Activated B cell treated with CpG ODN at 0.5 μM for 24 hours (primary cell): ENCODE measurements at regions of chr16 and their contacts with region 1.

Region 1: GRCh38 chr16:23803591-23804123 is 32.1 kb upstream of the PRKCB start:
- DNase-seq: peak; percentile 48
- ATAC-seq: peak; percentile 82
- H3K4me3 Mint-ChIP-seq: peak overlapping the region; percentile 51
- H3K27ac Mint-ChIP-seq: peak overlapping the region; percentile 26
- H3K4me1 Mint-ChIP-seq: peaks cover 47% of the 10 kb centered on the region
- H3K27me3 Mint-ChIP-seq: no peaks in the 10 kb centered on the region
- CTCF ChIP-seq: no peak

Region 2: DNA sequence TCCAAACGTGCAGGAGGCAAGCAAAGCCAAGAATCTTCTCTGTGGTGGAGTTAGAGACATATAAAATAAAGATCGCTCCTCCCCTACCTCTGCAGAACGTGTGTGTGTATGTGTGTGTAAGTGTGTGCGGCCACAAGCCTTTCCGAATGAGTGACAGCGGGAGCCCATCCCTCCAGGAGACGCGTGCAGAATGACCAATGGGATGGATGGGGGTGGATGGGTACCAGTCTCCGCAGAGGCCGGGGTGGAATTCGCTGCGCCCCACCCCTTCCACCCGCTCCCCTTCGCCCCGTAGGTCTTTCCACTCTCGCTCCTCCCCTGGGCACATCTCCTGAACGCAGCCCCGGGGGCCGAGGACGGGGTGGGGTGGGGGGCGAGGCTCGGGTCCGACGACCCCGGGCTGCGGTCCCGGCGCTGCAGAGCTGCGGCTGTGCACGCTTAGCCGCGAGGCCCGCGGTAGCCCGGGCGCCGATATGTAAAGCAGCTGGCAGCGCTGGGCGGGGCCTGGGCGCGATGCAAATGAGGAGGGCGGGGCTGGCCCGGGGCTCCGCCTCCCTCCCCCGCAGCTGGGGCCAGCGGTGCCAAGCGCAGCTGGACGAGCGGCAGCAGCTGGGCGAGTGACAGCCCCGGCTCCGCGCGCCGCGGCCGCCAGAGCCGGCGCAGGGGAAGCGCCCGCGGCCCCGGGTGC is 31.9 kb after region 1 on chr16 and contains the start of gene PRKCB:
- CTCF ChIA-PET with region 1: interaction called, 11 read pairs
- POLR2A ChIA-PET with region 1: interaction called, 7 read pairs
- intact Hi-C with region 1: loop called (anchors 1 kb)
- DNase-seq: peak; percentile 98
- ATAC-seq: peak; percentile 80
- H3K4me3 Mint-ChIP-seq: peak within 1 kb of the TSS; percentile 98
- H3K27ac Mint-ChIP-seq: peak within 1 kb of the TSS; percentile 91
- H3K4me1 Mint-ChIP-seq: peaks cover 43% of the 10 kb centered on the region
- H3K27me3 Mint-ChIP-seq: no peaks in the 10 kb centered on the region
- CTCF ChIP-seq: no peak
- total RNA-seq, gene PRKCB: 122 and 146 TPM in 2 replicates

Region 3: DNA sequence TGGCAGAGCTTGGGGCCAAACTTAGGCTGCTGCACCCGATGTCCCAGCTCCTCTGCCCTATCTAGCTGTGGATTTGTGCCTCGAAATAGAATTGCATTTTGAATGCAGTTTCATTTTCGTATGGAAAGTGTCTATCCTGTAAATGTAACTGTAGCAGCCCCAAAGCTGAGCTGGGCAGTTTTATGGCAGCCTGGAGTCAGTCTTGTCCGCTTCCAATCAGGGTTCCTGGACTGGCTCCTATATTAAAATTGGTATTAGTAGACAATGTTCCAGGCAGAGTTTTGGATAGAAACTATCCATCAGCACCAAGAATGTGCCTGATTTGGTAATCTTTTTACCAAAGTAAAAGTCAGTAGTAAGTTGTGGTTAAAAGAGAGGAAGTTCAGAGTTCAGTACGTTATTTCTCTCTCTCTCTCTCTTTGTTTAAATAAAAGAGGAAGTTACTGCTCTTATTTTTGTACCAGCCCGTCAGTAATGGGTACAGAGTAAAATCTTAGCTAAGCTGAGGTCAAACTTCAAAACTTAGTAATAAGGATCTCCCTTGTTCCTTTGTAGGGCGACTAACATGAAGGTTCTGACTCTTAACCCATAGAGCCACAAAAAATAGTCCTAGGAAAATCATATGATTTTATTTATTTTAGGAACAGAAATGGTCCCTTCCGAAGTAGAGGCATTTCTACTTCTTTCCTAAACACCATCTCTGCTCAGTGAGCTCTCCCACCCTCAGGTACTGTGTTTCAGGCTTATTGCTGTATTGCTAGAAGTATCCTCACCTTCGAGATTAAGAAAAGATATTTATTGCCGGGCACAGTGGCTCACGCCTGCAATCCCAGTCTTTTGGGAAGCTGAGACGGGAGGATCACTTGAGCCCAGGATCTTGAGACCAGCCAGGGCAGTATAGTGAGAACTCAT is 60.1 kb after region 1 on chr16:
- CTCF ChIA-PET with region 1: interaction called, 28 read pairs
- POLR2A ChIA-PET with region 1: interaction called, 6 read pairs
- intact Hi-C with region 1: no loop called
- DNase-seq: no peak
- ATAC-seq: peak; percentile 78
- H3K4me3 Mint-ChIP-seq: peak overlapping the region; percentile 87
- H3K27ac Mint-ChIP-seq: peak overlapping the region; percentile 96
- H3K4me1 Mint-ChIP-seq: peaks cover 95% of the 10 kb centered on the region
- H3K27me3 Mint-ChIP-seq: no peaks in the 10 kb centered on the region
- CTCF ChIP-seq: no peak

Region 4: GRCh38 chr16:23877107-23878090 is 73.7 kb after region 1 on chr16:
- CTCF ChIA-PET with region 1: interaction called, 32 read pairs
- POLR2A ChIA-PET with region 1: interaction called, 4 read pairs
- intact Hi-C with region 1: loop called (anchors 1 kb)
- DNase-seq: no peak
- ATAC-seq: peak; percentile 18
- H3K4me3 Mint-ChIP-seq: peak overlapping the region; percentile 28
- H3K27ac Mint-ChIP-seq: peak overlapping the region; percentile 88
- H3K4me1 Mint-ChIP-seq: peaks cover 89% of the 10 kb centered on the region
- H3K27me3 Mint-ChIP-seq: no peaks in the 10 kb centered on the region
- CTCF ChIP-seq: no peak

Region 5: GRCh38 chr16:23966597-23967394 is 163.1 kb after region 1 on chr16:
- CTCF ChIA-PET with region 1: interaction called, 11 read pairs
- POLR2A ChIA-PET with region 1: no interaction called
- intact Hi-C with region 1: no loop called
- DNase-seq: no peak
- ATAC-seq: peak; percentile 79
- H3K4me3 Mint-ChIP-seq: peak overlapping the region; percentile 59
- H3K27ac Mint-ChIP-seq: peak overlapping the region; percentile 67
- H3K4me1 Mint-ChIP-seq: peaks cover 87% of the 10 kb centered on the region
- H3K27me3 Mint-ChIP-seq: no peaks in the 10 kb centered on the region
- CTCF ChIP-seq: no peak

Region 6: GRCh38 chr16:24041826-24042631 is 238.4 kb after region 1 on chr16:
- CTCF ChIA-PET with region 1: interaction called, 206 read pairs
- POLR2A ChIA-PET with region 1: interaction called, 15 read pairs
- intact Hi-C with region 1: no loop called
- DNase-seq: peak; percentile 64
- ATAC-seq: peak; percentile 93
- H3K4me3 Mint-ChIP-seq: no peak overlapping the region
- H3K27ac Mint-ChIP-seq: peak overlapping the region; percentile 8
- H3K4me1 Mint-ChIP-seq: peaks cover 8% of the 10 kb centered on the region
- H3K27me3 Mint-ChIP-seq: no peaks in the 10 kb centered on the region
- CTCF ChIP-seq: peak; percentile 57

Region 7: DNA sequence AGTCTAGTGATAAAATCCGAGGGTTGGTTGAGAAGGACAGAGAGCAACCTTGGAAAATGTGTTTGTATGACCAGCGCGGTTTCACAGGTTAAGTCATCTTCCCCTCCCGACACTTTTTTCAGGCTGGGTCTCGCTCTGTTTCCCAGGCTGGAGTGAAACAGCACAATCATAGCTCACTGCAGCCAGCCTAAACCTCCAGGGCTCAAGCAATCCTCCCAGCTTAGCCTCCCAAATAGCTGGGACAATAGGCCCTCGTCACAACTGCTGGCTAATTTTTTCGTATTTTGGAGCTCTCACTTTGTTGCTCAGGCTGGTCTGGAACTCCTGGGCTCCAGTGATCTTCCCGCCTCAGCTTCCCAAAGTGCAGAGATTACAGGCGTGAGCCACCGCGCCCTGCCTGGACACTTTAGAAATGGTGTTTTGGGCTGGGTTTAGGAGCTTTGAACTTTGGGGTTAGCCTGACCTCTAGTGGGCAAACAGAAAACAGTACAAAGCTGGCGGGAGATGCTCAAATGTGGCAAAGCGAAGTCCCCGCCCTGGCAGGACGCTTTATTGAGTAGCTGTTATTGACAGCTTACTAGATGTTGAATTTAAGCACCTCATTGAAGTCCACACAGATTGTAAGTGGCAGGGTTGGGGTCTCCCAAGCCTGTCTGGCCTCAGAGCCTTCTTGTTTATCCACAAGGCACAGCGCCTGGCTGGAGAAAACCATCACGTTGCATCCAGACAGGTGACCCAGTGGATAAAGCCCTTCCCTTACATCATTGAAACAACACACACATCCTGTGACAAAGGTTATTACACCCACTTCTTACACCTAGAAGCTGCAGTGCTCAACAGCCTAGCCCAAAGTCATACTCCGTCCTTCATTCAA is 701.1 kb after region 1 on chr16:
- CTCF ChIA-PET with region 1: interaction called, 13 read pairs
- POLR2A ChIA-PET with region 1: no interaction called
- intact Hi-C with region 1: loop called (anchors 1 kb)
- DNase-seq: peak; percentile 30
- ATAC-seq: peak; percentile 86
- H3K4me3 Mint-ChIP-seq: no peak overlapping the region
- H3K27ac Mint-ChIP-seq: no peak overlapping the region
- H3K4me1 Mint-ChIP-seq: peaks cover 2% of the 10 kb centered on the region
- H3K27me3 Mint-ChIP-seq: peaks cover 25% of the 10 kb centered on the region
- CTCF ChIP-seq: no peak